Activated T-helper 1 cell treated with anti-CD3 and anti-CD28 coated beads, Interleukin-12 subunit alpha, Interleukin-12 subunit beta, Interleukin-2, Interleukin-4 antibody, amounts not matched to agents 30 ng/mL and 10 ng/mL and 1 ng/mL, durations not matched to agents 14 hours and 24 hours and 36 hours (primary cell): ENCODE measurements at regions of chr6 and their contacts with region 1.

Region 1: GRCh38 chr6:33391278-33391921 is at the start of gene KIFC1:
- DNase-seq: peak; percentile 99
- H3K4me3 Mint-ChIP-seq: peak within 1 kb of the TSS; percentile 84
- H3K27ac Mint-ChIP-seq: peak within 1 kb of the TSS; percentile 94
- H3K4me1 Mint-ChIP-seq: peaks cover 47% of the 10 kb centered on the region
- H3K27me3 Mint-ChIP-seq: peaks cover 2% of the 10 kb centered on the region
- total RNA-seq, gene KIFC1: 54.7 and 59.6 TPM in 2 replicates

Region 2: GRCh38 chr6:33271458-33272274 is 119.7 kb before region 1 on chr6 and contains the starts of genes RPS18 and VPS52:
- intact Hi-C with region 1: loop called (anchors 1 kb)
- DNase-seq: peak; percentile 89
- H3K4me3 Mint-ChIP-seq: peak within 1 kb of the TSS; percentile 97
- H3K27ac Mint-ChIP-seq: peak within 1 kb of the TSS; percentile 99
- H3K4me1 Mint-ChIP-seq: peaks cover 55% of the 10 kb centered on the region
- H3K27me3 Mint-ChIP-seq: no peaks in the 10 kb centered on the region
- total RNA-seq, gene RPS18: 2,930 and 2,946 TPM in 2 replicates
- total RNA-seq, gene VPS52: 59.8 and 63.5 TPM in 2 replicates

Region 3: DNA sequence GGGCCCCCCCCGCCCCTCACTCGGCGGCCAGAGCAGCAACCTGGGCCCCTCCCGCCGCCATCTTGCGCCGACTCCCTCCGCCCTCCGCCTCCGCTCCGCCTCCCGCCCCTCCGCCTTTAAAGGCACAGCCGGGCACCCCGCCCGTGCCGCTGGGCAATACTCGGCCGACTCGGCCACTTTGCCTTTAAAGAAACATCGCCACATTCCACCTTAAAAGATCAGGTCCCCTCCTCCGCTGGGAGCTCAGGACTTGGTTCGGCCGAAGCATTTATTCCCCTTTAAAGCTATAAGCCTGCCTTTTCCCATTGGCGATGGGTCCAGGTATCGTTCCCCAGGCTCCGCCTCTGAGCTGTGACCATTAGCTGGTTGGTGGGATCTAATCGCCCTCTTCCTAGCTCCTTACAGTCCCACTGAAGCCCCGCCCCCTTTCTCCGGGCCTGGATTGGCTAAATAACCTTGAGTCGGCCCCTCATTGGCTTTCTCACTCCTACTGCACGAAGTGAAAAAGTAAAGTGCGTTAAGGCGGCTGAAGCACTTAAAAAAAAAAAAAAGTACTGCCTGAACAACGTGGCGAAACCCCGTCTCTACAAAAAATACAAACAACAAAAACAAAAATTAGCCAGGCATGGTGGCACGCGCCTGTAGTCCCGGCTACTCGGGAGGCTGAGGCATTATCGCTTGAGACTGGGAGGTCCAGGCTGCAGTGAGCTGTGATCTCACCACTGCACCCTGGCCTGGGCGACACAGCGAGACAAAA is 73.6 kb before region 1 on chr6 and contains the start of gene ZBTB22:
- intact Hi-C with region 1: loop called (anchors 1 kb)
- DNase-seq: peak; percentile 92
- H3K4me3 Mint-ChIP-seq: peak within 1 kb of the TSS; percentile 97
- H3K27ac Mint-ChIP-seq: peak within 1 kb of the TSS; percentile 94
- H3K4me1 Mint-ChIP-seq: peaks cover 74% of the 10 kb centered on the region
- H3K27me3 Mint-ChIP-seq: no peaks in the 10 kb centered on the region
- total RNA-seq, gene ZBTB22: 12.5 and 14.7 TPM in 2 replicates

Region 4: GRCh38 chr6:33410050-33410710 is 18.8 kb after region 1 on chr6:
- intact Hi-C with region 1: loop called (anchors 1 kb)
- DNase-seq: peak; percentile 99
- H3K4me3 Mint-ChIP-seq: peak overlapping the region; percentile 91
- H3K27ac Mint-ChIP-seq: peak overlapping the region; percentile 96
- H3K4me1 Mint-ChIP-seq: peaks cover 50% of the 10 kb centered on the region
- H3K27me3 Mint-ChIP-seq: no peaks in the 10 kb centered on the region

Region 5: DNA sequence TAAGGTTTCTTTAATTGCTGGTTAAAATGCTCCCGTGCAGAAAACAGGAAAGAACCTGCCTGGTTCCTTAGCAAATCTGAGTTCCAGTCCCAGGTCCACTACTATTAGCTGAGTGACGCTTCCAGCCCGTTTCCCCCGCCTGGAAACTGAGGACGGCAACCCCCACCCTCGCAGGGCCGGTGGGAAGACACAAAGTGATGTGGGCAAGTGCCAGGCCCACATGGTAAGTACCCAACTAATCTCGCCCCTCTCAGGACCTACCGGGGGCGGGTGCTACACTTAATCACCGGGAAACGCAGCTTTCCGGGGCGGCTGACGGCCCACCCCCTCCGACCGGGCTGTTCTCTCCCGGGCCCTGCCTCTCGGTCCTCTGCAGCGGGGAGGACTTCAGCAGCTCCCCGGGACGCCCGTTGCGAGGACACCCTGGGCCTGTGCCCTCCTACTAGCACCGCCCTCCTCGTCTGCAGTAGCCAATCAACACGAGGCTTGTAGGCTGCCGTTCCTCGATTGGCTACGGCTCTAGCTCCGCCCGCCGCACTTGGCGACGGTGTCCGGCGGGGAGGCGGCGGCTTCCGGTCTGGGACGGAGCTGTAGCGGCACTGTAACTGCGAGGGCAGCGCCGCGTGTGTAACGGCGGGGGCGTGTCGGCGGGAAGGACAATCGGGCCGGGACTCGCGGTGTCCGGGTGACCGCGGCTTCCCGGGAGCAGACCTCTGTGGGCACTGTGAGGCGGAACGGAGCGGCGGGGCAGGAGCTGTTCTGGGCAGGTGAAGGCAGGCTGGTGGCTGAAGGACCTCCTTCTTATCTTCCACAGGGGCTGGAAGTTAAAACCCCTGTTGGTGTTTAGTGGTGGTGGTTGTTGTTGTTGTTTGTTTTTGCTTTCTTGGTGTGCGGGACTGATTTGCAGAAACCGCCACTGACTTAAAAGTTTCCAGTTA is 62.9 kb after region 1 on chr6 and contains the start of gene ZBTB9:
- intact Hi-C with region 1: loop called (anchors 1 kb)
- DNase-seq: peak; percentile 96
- H3K4me3 Mint-ChIP-seq: peak within 1 kb of the TSS; percentile 95
- H3K27ac Mint-ChIP-seq: peak within 1 kb of the TSS; percentile 88
- H3K4me1 Mint-ChIP-seq: peaks cover 42% of the 10 kb centered on the region
- H3K27me3 Mint-ChIP-seq: no peaks in the 10 kb centered on the region
- total RNA-seq, gene ZBTB9: 15.8 and 17.0 TPM in 2 replicates

Region 6: GRCh38 chr6:33607784-33608161 is 216.4 kb after region 1 on chr6:
- intact Hi-C with region 1: loop called (anchors 1 kb)
- DNase-seq: no peak
- H3K4me3 Mint-ChIP-seq: no peak overlapping the region
- H3K27ac Mint-ChIP-seq: no peak overlapping the region
- H3K4me1 Mint-ChIP-seq: no peaks in the 10 kb centered on the region
- H3K27me3 Mint-ChIP-seq: peaks cover 4% of the 10 kb centered on the region